WTC11 (cell line): ENCODE measurements at regions of chr5 and their contacts with region 1.

Region 1: GRCh38 chr5:132807163-132807838 is 5.8 kb upstream of the SOWAHA start:
- DNase-seq: peak; percentile 67
- ATAC-seq: peak; percentile 99
- H3K4me3 Mint-ChIP-seq: no peak overlapping the region
- H3K27ac Mint-ChIP-seq: no peak overlapping the region
- H3K4me1 Mint-ChIP-seq: peaks cover 16% of the 10 kb centered on the region
- H3K27me3 Mint-ChIP-seq: peaks cover 41% of the 10 kb centered on the region
- CTCF ChIP-seq: no peak

Region 2: GRCh38 chr5:132526290-132526973 is 280.9 kb before region 1 on chr5:
- CTCF ChIA-PET with region 1: interaction called, 10 read pairs
- POLR2A ChIA-PET with region 1: no interaction called
- DNase-seq: peak; percentile 42
- ATAC-seq: peak; percentile 86
- H3K4me3 Mint-ChIP-seq: peak overlapping the region; percentile 52
- H3K27ac Mint-ChIP-seq: no peak overlapping the region
- H3K4me1 Mint-ChIP-seq: no peaks in the 10 kb centered on the region
- H3K27me3 Mint-ChIP-seq: no peaks in the 10 kb centered on the region; the same call in 1 of the 2 replicates
- CTCF ChIP-seq: peak; percentile 89; the same call in 1 of the 2 replicates

Region 3: DNA sequence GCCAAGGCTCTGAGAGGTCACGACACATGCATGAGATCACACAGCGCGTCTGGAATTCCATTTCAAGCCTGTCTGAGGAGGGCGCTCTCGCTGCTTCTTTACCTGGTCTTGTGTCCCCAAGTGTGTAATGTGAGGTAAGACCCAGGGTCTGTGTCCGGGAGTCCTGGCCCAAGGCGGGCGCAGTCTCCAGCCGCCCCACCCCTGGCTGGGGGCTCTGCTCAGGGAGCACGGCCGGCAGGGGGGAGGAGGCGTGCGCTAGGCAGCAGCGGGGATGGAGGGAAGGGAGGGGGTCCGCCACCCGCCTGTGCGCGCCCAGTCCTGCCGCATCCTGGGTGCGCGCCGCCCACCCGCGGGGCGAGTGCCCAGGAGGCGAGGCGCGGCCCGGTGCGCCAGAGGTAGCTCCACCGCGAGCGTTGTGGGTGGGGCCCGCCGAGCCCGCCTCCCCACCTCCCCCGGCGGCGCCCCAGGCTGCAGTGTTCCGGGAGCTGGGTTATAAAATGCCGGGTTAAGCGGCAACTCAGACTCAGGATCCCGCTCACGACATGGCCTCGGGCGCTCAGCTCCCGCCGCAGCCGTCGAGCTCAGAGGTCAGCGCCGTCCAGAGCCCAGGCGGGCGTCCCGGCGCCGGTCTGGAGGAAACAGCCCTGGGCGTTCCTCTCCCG is 60.2 kb before region 1 on chr5 and contains the start of gene CCNI2:
- CTCF ChIA-PET with region 1: interaction called, 22 read pairs
- POLR2A ChIA-PET with region 1: no interaction called
- DNase-seq: peak; percentile 73
- ATAC-seq: peak; percentile 81
- H3K4me3 Mint-ChIP-seq: peak within 1 kb of the TSS; percentile 59
- H3K27ac Mint-ChIP-seq: no peak within 1 kb of the TSS
- H3K4me1 Mint-ChIP-seq: peaks cover 4% of the 10 kb centered on the region; the same call in 1 of the 2 replicates
- H3K27me3 Mint-ChIP-seq: peaks cover 66% of the 10 kb centered on the region
- CTCF ChIP-seq: no peak
- total RNA-seq, gene CCNI2: 1.1 to 1.7 TPM (median 1.6 TPM) in 3 replicates

Region 4: DNA sequence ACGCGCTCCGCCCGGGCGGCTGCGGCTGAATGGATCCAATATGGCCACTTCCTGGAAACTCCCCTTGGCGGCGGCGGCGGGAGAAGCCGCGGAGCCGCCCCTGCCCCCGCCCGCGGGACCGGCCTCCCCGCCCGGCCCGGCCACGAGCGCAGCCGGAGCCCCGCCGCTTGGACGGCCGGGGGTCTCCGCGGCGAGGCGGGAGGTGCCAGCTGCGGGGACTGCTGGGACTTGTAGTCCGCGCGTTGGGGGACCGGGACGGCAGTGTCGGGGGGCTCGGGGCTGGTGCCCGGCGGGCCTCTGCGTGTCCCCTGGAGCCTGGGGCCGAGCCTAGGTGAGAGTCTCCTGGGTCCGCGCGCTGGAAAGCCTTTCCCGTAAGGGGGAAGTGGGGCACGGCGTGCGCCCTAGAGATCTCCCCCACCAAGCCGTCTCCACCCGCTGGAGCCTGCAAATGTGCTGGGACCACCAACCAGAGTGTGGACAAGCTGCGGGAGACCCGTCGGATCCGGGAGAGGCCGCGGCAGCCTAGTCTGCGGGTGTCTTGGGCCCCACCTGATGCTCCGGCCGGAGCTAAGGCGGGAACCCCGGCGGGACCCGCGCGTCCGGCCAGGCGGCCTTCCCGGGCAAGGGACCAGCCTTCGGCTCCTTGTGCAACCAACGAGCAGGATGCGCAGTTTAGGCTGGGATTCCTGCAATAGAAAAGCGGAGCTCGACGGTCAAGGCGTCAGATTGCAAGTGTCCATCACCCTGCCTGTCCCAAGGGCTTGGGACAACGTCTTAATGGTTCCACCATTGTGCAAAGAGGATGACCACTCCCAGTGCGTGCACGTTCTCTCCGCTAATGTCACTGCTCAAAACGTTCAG is 29.9 kb before region 1 on chr5 and contains the start of gene SEPTIN8:
- CTCF ChIA-PET with region 1: interaction called, 11 read pairs
- POLR2A ChIA-PET with region 1: no interaction called
- DNase-seq: peak; percentile 54
- ATAC-seq: peak; percentile 57
- H3K4me3 Mint-ChIP-seq: peak within 1 kb of the TSS; percentile 67
- H3K27ac Mint-ChIP-seq: no peak within 1 kb of the TSS
- H3K4me1 Mint-ChIP-seq: peaks cover 23% of the 10 kb centered on the region
- H3K27me3 Mint-ChIP-seq: peaks cover 50% of the 10 kb centered on the region
- CTCF ChIP-seq: no peak
- total RNA-seq, gene SEPTIN8: 35.8 to 43.3 TPM (median 38.1 TPM) in 3 replicates

Region 5: GRCh38 chr5:132866342-132867045 is 59.2 kb after region 1 on chr5 and contains the starts of genes GDF9 and UQCRQ:
- CTCF ChIA-PET with region 1: interaction called, 10 read pairs
- POLR2A ChIA-PET with region 1: no interaction called
- DNase-seq: peak; percentile 97
- ATAC-seq: peak; percentile 99
- H3K4me3 Mint-ChIP-seq: peak within 1 kb of the TSS; percentile 100
- H3K27ac Mint-ChIP-seq: peak within 1 kb of the TSS; percentile 100
- H3K4me1 Mint-ChIP-seq: peaks cover 22% of the 10 kb centered on the region
- H3K27me3 Mint-ChIP-seq: peaks cover 3% of the 10 kb centered on the region; the same call in 1 of the 2 replicates
- CTCF ChIP-seq: no peak
- total RNA-seq, gene GDF9: 0.34 to 0.42 TPM (median 0.37 TPM) in 3 replicates
- total RNA-seq, gene UQCRQ: 244 to 256 TPM (median 244 TPM) in 3 replicates

Region 6: GRCh38 chr5:132883261-132883834 is 76.0 kb after region 1 on chr5:
- CTCF ChIA-PET with region 1: no interaction called
- POLR2A ChIA-PET with region 1: no interaction called
- DNase-seq: peak; percentile 28
- ATAC-seq: peak; percentile 81
- H3K4me3 Mint-ChIP-seq: no peak overlapping the region
- H3K27ac Mint-ChIP-seq: no peak overlapping the region
- H3K4me1 Mint-ChIP-seq: no peaks in the 10 kb centered on the region
- H3K27me3 Mint-ChIP-seq: no peaks in the 10 kb centered on the region
- CTCF ChIP-seq: no peak